PC-9 (cell line): ENCODE measurements at regions of chr10 and their contacts with region 1.

Region 1: GRCh38 chr10:104762793-104763192 is 121.7 kb downstream of the SORCS3 start:
- DNase-seq: no peak
- H3K4me3 ChIP-seq: no peak overlapping the region
- H3K27ac ChIP-seq: no peak overlapping the region
- H3K4me1 ChIP-seq: no peaks in the 10 kb centered on the region
- H3K27me3 ChIP-seq: no peaks in the 10 kb centered on the region
- CTCF ChIP-seq: no peak

Region 2: DNA sequence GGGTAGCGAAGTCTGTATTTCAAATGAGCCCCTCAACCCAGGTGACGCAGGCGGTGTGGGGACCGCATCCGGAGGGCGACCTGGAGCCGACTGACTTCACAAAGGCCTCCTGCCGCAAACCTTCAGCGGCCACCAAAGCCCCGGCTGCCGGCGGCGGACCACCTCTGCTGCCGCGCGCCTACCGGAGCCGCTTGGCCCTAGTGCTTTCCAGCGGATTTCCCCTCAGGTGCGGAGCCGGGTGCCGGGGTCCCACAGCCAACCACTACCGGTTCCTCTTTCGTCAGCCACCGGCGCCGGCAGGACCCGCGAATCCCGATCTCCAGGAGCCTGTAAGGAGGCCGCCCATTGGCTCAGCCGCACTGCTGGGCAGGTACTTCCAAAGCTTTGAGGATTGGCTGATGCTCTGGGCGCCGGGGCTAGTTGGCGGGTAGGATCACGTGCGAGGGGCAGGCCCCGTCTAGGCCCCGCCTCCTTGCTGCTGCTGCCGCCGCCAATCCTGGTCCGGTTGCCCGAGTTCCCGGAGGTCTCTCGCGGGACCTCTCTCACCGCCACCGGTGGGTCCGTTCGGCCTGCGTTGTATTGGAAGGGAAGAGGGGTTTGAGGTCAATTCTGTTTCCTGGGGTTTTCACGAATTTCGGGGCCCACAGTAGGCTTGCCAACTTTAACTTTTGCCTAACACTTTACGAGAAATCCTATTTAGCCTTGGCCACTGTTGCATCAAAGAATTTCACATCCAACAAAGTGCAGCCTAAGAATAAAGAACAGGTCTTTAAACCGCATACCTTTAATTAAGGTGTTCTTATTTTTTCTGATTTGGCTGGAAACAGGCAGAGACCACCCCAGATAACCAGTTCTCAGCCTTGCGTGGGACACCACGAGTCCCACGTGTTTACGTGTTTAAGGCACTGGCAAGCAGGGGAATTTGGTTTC is 493.8 kb before region 1 on chr10 and contains the start of gene GSTO2:
- CTCF ChIA-PET with region 1: interaction called, 11 read pairs
- POLR2A ChIA-PET with region 1: no interaction called
- intact Hi-C with region 1: no loop called
- DNase-seq: peak; percentile 94 to 95
- H3K4me3 ChIP-seq: peak within 1 kb of the TSS; percentile 80
- H3K27ac ChIP-seq: peak within 1 kb of the TSS; percentile 64
- H3K4me1 ChIP-seq: peaks cover 9% of the 10 kb centered on the region; the same call in 1 of the 2 replicates
- H3K27me3 ChIP-seq: no peaks in the 10 kb centered on the region
- CTCF ChIP-seq: no peak
- total RNA-seq, gene GSTO2: 3.3 and 4.3 TPM in 2 replicates